Ascending aorta (tissue), 2 donors: ENCODE measurements at regions of chrX and their contacts with region 1.

Region 1: DNA sequence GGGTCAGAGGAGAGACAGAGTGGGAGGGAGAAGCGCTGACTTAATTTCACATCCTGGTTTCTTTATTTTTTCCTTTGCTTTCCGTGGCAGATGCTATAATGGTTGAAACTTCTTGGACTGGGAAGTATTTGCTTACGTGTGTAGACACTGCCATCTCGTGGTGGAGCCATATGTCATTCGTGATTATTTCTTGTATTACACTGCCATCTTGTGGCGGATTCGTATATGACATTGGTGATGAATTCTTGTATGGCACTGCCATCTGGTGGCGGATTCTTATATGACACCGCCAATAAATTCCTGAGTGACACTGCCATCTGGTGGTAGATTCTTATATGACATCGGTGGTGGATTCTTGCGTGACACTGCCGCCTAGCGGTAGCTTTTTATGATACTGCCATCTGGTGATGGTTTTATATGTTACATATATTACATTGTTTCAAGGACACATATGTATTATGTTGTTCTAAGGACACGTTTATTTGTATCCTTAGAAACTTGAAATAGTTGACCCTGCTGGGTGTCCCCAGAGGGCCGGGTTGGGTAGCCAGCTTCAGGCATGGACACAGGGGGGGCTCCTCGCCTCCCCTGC is 37.3 kb upstream of the CLCN4 start:
- DNase-seq: peak in 1 of 2 donors; percentile 91
- H3K4me3 ChIP-seq: no peak overlapping the region
- H3K27ac ChIP-seq: peak overlapping the region in 1 of 2 donors; percentile 38
- H3K4me1 ChIP-seq: peaks cover 2 to 3% of the 10 kb centered on the region in 2 donors
- H3K27me3 ChIP-seq: no peaks in the 10 kb centered on the region
- CTCF ChIP-seq: peak; percentile 99 to 100 (median 100)

Region 2: DNA sequence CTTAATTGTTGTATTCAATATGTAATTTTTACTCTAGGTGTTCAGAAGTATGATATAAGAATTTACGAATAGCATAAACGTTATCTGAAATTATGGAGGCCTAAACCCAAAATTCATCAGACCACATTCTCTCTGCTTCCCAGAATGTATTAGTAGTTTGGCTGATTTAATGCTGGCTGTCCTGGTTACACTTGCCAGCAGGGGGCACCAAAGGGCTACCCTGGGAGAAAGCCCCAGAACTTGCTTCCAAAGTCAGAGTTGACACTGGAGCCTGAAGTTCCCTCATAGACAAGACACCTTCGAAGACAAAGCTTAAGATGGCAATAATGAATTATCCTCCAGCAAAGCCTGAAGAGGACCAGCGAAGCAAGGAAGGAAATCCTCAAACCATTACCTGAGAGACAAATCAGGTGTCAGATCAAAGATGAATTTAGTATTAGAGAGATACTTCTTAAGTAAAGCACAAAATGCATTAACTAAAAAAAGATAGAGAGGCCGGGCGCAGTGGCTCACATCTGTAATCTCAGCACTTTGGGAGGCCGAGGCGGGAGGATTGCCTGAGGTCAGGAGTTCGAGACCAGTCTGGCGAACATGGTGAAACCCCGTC is 1376.3 kb before region 1 on chrX:
- intact Hi-C with region 1: loop called (anchors 5 kb)
- DNase-seq: no peak
- H3K4me3 ChIP-seq: no peak overlapping the region
- H3K27ac ChIP-seq: no peak overlapping the region
- H3K4me1 ChIP-seq: no peaks in the 10 kb centered on the region
- H3K27me3 ChIP-seq: peaks cover 4% of the 10 kb centered on the region
- CTCF ChIP-seq: peak; percentile 30 to 65 (median 64)

Region 3: DNA sequence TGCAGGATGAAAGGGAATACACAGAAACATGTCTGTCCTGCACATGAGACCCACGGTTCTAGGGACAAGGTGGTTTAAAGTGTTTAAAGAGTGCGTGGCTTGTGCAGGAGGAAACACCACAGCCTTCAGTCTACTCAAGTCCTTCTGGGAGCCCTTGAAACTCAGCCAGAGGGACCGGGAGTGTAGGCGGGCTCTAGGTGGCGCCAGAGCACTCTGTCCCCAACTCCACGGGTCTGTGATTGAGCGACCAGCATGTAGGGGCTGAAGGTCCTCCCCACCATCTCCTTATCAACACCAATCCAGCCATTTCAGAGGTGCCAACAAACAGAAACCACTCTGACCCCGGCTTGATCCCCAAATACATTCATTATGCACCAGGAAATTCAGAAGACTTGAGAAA is 234.3 kb before region 1 on chrX:
- intact Hi-C with region 1: loop called (anchors 5 kb)
- DNase-seq: no peak
- H3K4me3 ChIP-seq: no peak overlapping the region
- H3K27ac ChIP-seq: no peak overlapping the region
- H3K4me1 ChIP-seq: no peaks in the 10 kb centered on the region
- H3K27me3 ChIP-seq: no peaks in the 10 kb centered on the region
- CTCF ChIP-seq: peak in 2 of 3 experiments; percentile 31 to 47

Region 4: GRCh38 chrX:9995855-9996339 is 123.6 kb before region 1 on chrX:
- intact Hi-C with region 1: loop called (anchors 1 kb)
- DNase-seq: peak in 1 of 2 donors; percentile 90
- H3K4me3 ChIP-seq: no peak overlapping the region
- H3K27ac ChIP-seq: no peak overlapping the region
- H3K4me1 ChIP-seq: no peaks in the 10 kb centered on the region
- H3K27me3 ChIP-seq: no peaks in the 10 kb centered on the region
- CTCF ChIP-seq: peak; percentile 88 to 91 (median 89)

Region 5: DNA sequence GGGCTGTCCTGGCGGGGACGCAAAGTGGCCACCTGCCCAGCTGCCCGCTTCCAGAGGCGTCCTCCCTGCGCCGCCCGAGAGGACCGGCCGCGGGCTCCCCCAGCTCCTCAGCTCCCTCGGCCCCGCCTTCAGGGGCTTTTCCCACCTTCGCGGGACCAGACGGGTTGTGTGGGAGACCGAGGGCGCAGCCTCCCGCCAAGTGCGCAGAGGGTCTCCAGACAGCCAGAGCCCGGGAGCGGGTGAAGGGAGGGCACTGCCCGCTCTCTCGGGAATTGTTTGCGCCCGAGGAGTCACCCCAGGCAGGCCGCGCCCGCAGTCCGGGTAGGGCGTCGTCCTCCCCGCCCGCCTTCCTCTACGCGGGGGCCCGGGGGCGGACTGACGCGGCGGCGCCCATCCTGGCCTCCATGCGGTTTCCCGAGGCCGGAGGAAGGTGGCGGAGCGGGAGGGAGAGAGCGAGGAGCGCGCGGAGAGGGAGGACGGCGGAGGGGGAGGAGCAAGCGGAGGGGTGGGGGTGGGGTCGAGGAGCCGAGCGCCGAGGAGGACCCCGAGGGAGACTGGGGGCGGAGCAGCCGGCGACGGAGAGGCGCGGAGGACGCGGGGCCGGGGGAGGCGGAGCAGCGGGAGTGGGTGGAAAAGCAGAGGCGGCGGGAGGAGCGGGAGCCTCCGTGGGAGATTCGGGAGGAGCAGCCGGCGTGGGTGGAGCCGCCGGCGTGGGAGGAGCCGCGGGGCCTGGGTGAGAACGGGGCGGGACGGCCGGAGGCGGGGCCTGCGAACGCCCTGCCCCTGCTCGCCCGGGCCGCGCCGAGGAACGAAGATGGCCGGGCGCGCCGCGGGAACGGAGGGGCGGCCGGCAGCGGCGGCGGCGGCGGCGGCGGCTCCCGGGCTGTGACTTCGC is 104.8 kb before region 1 on chrX:
- intact Hi-C with region 1: loop called (anchors 1 kb)
- DNase-seq: peak; percentile 52 to 92
- H3K4me3 ChIP-seq: peak overlapping the region; percentile 56 to 82
- H3K27ac ChIP-seq: peak overlapping the region; percentile 89 to 92
- H3K4me1 ChIP-seq: peaks cover 0 to 5% of the 10 kb centered on the region in 2 donors
- H3K27me3 ChIP-seq: no peaks in the 10 kb centered on the region
- CTCF ChIP-seq: no peak